ENCODE measurements at regions of chr15 and their contacts with region 1.

Region 1: DNA sequence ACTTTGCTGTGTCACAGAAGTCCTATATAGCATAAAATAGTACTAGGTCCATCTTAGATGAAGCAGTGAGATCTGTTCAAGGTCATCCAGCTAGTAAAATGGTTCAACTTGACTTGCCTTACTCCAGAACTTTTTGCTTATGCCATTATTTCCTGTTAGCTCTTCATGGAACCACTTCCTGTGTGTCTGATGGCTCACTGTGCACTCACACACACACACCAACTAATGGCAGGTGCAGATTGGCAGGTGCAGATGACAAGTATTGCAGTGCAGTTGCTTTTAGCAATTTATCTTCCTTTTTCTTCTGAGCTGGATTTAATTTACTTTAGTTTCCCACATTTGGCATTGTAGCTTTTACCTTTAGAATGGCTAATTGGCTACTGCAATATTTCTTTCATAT is 29.8 kb downstream of the GOLGA8S start:
- DNase-seq: no peak
- H3K4me3 ChIP-seq: no peak overlapping the region
- H3K4me3 Mint-ChIP-seq: no peak overlapping the region
- H3K27ac Mint-ChIP-seq: no peak overlapping the region
- H3K4me1 ChIP-seq: no peaks in the 10 kb centered on the region
- H3K4me1 Mint-ChIP-seq: no peaks in the 10 kb centered on the region
- H3K27me3 ChIP-seq: no peaks in the 10 kb centered on the region
- H3K27me3 Mint-ChIP-seq: peaks cover 20% of the 10 kb centered on the region
- CTCF ChIP-seq: no peak

Region 2: DNA sequence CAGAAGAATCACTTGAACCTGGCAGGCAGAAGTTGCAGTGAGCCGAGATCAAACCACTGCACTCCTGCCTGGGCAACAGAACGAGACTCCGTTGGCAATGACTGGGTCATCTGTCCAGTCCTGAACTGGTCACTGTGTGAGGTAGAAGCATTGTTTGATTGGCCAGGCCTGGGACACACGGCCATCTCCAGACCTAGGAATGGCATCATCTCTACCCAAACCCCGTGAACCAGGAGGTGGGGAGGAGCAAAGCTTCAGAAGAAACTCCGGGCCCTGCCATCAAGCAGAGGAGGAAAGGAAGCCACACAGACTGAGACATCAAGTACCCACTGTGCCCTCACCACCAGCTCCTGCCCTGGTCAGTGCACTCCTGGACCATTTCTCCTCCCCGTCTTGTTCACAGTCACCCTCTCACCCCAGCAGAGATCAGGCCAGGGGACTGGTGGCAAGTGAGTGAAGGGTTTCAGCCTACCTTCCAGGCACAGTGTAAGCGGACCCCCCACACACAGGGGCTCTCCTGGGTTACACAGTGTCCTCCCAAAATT is 31.0 kb after region 1 on chr15:
- CTCF ChIA-PET with region 1: no interaction called
- POLR2A ChIA-PET with region 1: no interaction called
- intact Hi-C with region 1: loop called (anchors 1 kb)
- DNase-seq: peak in 1 of 2 experiments; percentile 18
- H3K4me3 ChIP-seq: no peak overlapping the region
- H3K4me3 Mint-ChIP-seq: no peak overlapping the region
- H3K27ac Mint-ChIP-seq: no peak overlapping the region
- H3K4me1 ChIP-seq: no peaks in the 10 kb centered on the region
- H3K4me1 Mint-ChIP-seq: no peaks in the 10 kb centered on the region
- H3K27me3 ChIP-seq: no peaks in the 10 kb centered on the region
- H3K27me3 Mint-ChIP-seq: no peaks in the 10 kb centered on the region
- CTCF ChIP-seq: no peak

Region 3: GRCh38 chr15:23447107-23447500 is 62.7 kb after region 1 on chr15 and contains the start of gene GOLGA6L2:
- CTCF ChIA-PET with region 1: no interaction called
- POLR2A ChIA-PET with region 1: no interaction called
- intact Hi-C with region 1: no loop called
- DNase-seq: peak; percentile 50 to 68
- H3K4me3 ChIP-seq: no peak within 1 kb of the TSS
- H3K4me3 Mint-ChIP-seq: no peak within 1 kb of the TSS
- H3K27ac Mint-ChIP-seq: no peak within 1 kb of the TSS
- H3K4me1 ChIP-seq: 0 out of 2 replicates have a peak, but pooled peaks cover 6% of the 10 kb centered on the region
- H3K4me1 Mint-ChIP-seq: no peaks in the 10 kb centered on the region
- H3K27me3 ChIP-seq: no peaks in the 10 kb centered on the region
- H3K27me3 Mint-ChIP-seq: peaks cover 4% of the 10 kb centered on the region
- CTCF ChIP-seq: no peak
- total RNA-seq, gene GOLGA6L2: not detected in 2 replicates

Region 4: DNA sequence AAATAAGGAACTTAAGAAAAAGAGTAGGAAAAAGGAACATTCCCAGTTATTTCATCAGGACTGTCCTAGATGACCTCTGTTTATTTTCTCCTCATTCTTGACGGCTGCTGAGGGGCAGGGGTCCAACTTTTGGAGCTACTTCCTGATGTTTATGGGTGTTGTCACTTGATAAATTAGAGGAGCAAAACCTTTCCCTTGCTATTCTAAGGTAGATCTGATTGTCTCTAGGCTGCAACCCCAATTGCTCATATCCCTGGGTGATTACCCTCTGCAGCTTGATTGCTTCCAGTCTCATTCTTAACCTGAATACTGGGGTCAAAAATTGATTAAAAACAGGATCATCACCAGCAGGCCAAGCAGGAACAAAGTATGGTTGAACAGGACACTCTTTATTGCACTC is 613.7 kb after region 1 on chr15:
- CTCF ChIA-PET with region 1: no interaction called
- POLR2A ChIA-PET with region 1: no interaction called
- intact Hi-C with region 1: no loop called
- DNase-seq: no peak
- H3K4me3 ChIP-seq: no peak overlapping the region
- H3K4me3 Mint-ChIP-seq: no peak overlapping the region
- H3K27ac Mint-ChIP-seq: no peak overlapping the region
- H3K4me1 ChIP-seq: no peaks in the 10 kb centered on the region
- H3K4me1 Mint-ChIP-seq: no peaks in the 10 kb centered on the region
- H3K27me3 ChIP-seq: no peaks in the 10 kb centered on the region
- H3K27me3 Mint-ChIP-seq: no peaks in the 10 kb centered on the region
- CTCF ChIP-seq: no peak